CD4-positive, alpha-beta T cell (primary cell): ENCODE measurements at regions of chr2 and their contacts with region 1.

Region 1: DNA sequence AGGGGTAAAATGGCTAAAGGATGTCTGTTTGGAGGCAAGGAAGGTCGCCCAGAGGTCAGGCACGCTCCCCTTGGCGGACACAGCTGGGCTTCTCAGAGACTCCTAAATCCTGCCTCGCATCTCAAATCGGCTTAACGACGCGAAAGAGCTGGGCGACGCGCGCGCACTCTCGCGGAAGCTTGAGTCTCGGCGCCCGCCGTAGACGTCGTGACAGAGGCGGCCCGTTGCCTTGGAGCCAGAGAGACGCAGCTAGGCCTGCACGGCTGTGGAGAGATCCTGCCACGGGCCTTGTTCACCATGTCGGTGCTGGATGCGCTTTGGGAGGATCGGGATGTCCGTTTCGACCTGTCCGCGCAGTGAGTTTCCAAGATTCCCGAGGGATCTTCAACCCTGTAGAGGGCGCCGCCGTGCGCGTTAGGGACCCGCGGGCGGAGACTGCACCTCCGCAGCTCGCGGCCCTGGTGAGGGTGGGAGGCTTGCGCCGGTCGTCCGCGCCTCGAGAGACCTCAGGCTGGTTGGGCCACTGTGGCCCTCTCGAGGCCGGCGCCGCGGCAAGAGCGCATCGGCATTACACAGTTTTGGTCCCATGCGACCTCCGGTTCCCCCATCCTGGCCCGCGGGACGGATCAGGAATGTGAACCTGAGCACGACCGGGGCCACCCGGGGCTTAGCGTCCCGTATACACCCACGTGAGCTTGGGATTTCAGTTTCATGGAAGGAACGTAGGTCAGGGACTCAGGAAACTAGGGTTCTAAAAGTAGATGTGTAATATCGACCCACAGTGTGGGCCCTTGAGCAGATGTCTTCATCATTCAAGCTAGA is at the start of gene BBS5:
- DNase-seq: peak; percentile 48 to 80 (median 64)
- ATAC-seq: peak; percentile 97
- H3K4me3 ChIP-seq: peak within 1 kb of the TSS; percentile 63
- H3K4me3 Mint-ChIP-seq: peak within 1 kb of the TSS; percentile 94
- H3K27ac ChIP-seq: no peak within 1 kb of the TSS
- H3K27ac Mint-ChIP-seq: no peak within 1 kb of the TSS
- H3K4me1 ChIP-seq: peaks cover 14% of the 10 kb centered on the region
- H3K4me1 Mint-ChIP-seq: peaks cover 21% of the 10 kb centered on the region
- H3K27me3 ChIP-seq: no peaks in the 10 kb centered on the region
- H3K27me3 Mint-ChIP-seq: no peaks in the 10 kb centered on the region
- CTCF ChIP-seq: peak; percentile 41
- total RNA-seq, gene BBS5: 2.1 to 2.2 TPM

Region 2: GRCh38 chr2:169468841-169469240 is 10.6 kb before region 1 on chr2:
- CTCF ChIA-PET with region 1: interaction called, 4 read pairs
- POLR2A ChIA-PET with region 1: interaction called, 18 read pairs
- intact Hi-C with region 1: no loop called
- DNase-seq: no peak
- ATAC-seq: peak; percentile 50
- H3K4me3 ChIP-seq: no peak overlapping the region
- H3K4me3 Mint-ChIP-seq: no peak overlapping the region
- H3K27ac ChIP-seq: no peak overlapping the region
- H3K27ac Mint-ChIP-seq: no peak overlapping the region
- H3K4me1 ChIP-seq: no peaks in the 10 kb centered on the region
- H3K4me1 Mint-ChIP-seq: no peaks in the 10 kb centered on the region
- H3K27me3 ChIP-seq: no peaks in the 10 kb centered on the region
- H3K27me3 Mint-ChIP-seq: no peaks in the 10 kb centered on the region
- CTCF ChIP-seq: no peak

Region 3: DNA sequence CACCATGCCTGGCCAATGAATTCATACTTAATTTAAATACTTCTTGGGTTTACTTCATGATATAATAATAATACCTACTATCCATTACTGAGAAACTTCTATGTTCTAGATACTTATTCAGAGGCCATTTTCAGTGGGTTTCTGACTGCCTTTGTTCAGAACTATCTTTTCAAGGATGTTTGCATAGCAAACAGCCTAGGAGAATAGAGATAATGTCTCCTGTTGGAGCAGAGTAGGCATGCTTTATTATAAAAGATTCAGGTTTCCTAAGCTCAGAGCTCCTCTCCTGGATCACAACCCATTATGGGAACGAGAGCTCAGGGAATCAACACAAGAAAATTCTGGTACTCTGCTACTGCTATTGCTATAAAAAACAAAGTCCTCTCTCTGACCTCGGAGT is 83.1 kb after region 1 on chr2:
- CTCF ChIA-PET with region 1: no interaction called
- POLR2A ChIA-PET with region 1: no interaction called
- intact Hi-C with region 1: loop called (anchors 5 kb)
- DNase-seq: peak in 1 of 14 experiments; percentile 5
- ATAC-seq: peak; percentile 37
- H3K4me3 ChIP-seq: no peak overlapping the region
- H3K4me3 Mint-ChIP-seq: peak overlapping the region; percentile 22
- H3K27ac ChIP-seq: no peak overlapping the region
- H3K27ac Mint-ChIP-seq: no peak overlapping the region
- H3K4me1 ChIP-seq: no peaks in the 10 kb centered on the region
- H3K4me1 Mint-ChIP-seq: no peaks in the 10 kb centered on the region
- H3K27me3 ChIP-seq: no peaks in the 10 kb centered on the region
- H3K27me3 Mint-ChIP-seq: no peaks in the 10 kb centered on the region
- CTCF ChIP-seq: no peak

Region 4: DNA sequence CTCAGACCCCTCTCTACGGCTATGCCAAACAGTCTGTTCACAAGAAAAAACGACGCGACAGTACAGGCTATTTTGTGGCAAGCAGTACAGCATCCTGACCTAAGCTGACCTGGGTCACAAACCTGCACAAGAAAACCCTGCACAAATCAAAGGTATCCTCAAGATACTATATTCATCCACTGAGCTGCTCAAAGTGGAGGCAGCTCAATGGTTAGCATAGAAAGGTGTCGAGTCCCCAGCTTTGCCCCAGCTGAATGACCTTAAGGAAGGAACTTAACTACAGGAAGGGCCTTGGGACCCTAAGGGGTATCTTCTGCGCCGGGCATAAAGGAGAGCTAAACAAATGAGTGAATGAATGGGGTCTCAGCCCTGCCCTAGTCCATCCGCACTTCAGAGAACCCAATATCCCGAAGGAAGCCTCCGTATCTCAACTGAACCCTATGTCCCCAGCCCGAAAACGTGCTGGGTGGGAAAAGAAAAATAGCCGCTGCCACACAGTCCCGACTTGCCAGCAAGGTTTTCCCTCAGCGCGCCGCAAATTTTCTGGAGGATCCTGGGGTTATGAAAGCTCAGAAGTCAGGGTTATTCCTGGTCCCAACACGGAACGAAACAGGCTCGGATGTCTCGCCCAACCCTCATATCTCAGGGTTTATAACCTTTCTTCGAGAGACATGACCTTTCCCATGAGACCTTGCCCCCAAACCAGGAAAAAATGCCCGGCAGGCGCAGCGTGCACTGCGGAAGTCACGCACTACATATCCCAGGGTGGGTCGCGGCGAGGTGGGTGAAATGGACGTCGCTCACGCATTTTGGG is 93.9 kb after region 1 on chr2 and contains the start of gene FASTKD1:
- CTCF ChIA-PET with region 1: no interaction called
- POLR2A ChIA-PET with region 1: interaction called, 17 read pairs
- intact Hi-C with region 1: loop called in 1 of 2 experiments (anchors 5 kb)
- DNase-seq: peak; percentile 67 to 94 (median 80)
- ATAC-seq: peak; percentile 100
- H3K4me3 ChIP-seq: peak within 1 kb of the TSS; percentile 98
- H3K4me3 Mint-ChIP-seq: peak within 1 kb of the TSS; percentile 99
- H3K27ac ChIP-seq: peak within 1 kb of the TSS; percentile 1 to 68
- H3K27ac Mint-ChIP-seq: peak within 1 kb of the TSS; percentile 79
- H3K4me1 ChIP-seq: peaks cover 6% of the 10 kb centered on the region
- H3K4me1 Mint-ChIP-seq: peaks cover 25% of the 10 kb centered on the region
- H3K27me3 ChIP-seq: no peaks in the 10 kb centered on the region
- H3K27me3 Mint-ChIP-seq: peaks cover 4% of the 10 kb centered on the region
- CTCF ChIP-seq: no peak
- total RNA-seq, gene FASTKD1: 6.3 to 7.2 TPM

Region 5: GRCh38 chr2:169694113-169694903 is 214.8 kb after region 1 on chr2 and contains the starts of genes CFAP210 and PHOSPHO2:
- CTCF ChIA-PET with region 1: no interaction called
- POLR2A ChIA-PET with region 1: no interaction called
- intact Hi-C with region 1: loop called (anchors 5 to 10 kb)
- DNase-seq: peak; percentile 97 to 99 (median 99)
- ATAC-seq: peak; percentile 91
- H3K4me3 ChIP-seq: peak within 1 kb of the TSS; percentile 70
- H3K4me3 Mint-ChIP-seq: peak within 1 kb of the TSS; percentile 91
- H3K27ac ChIP-seq: peak within 1 kb of the TSS; percentile 80 to 91
- H3K27ac Mint-ChIP-seq: peak within 1 kb of the TSS; percentile 95
- H3K4me1 ChIP-seq: peaks cover 18% of the 10 kb centered on the region
- H3K4me1 Mint-ChIP-seq: peaks cover 18% of the 10 kb centered on the region
- H3K27me3 ChIP-seq: peaks cover 0 to 5% of the 10 kb centered on the region in 2 experiments
- H3K27me3 Mint-ChIP-seq: no peaks in the 10 kb centered on the region
- CTCF ChIP-seq: no peak
- total RNA-seq, gene CFAP210: 2.2 to 3.1 TPM
- total RNA-seq, gene PHOSPHO2: 4.5 to 6.5 TPM